Right cardiac atrium (tissue), 5 donors: ENCODE measurements at regions of chr6 and their contacts with region 1.

Region 1: DNA sequence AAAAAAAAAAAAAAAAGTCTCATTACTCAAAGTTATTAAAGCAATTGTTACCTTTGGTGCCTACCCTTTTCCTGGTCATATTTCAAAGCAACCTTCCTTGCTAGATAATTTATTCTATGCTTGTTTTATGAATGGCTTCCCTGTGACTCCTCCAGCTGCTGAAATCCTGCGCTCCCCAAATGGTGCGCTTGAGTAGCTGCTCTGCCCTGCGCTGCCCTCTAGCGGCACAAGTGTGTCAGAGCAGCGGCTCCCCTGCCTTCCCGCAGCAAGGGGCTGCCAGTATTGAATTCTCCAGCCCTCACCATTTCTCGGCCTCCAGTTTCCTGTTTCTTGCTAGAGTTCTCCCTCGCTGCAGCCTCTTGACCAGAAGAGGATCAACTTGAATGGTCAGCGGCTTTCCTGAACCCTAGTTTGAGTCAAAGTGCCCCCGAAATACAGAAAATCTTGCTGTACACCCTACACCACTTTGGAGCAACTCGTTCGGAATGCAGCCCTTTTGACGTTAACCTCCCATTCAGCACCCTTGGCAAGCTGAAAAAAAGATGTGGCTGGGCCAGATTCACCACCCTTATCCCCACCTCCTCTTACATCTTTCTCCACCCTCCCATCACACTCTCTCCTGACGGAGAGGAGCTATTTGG is 60.4 kb upstream of the KLHL31 start:
- DNase-seq: peak; percentile 79 to 92 (median 89)
- ATAC-seq: peak; percentile 85 to 87
- H3K4me3 ChIP-seq: no peak overlapping the region
- H3K27ac ChIP-seq: no peak overlapping the region
- H3K4me1 ChIP-seq: no peaks in the 10 kb centered on the region
- H3K27me3 ChIP-seq: no peaks in the 10 kb centered on the region

Region 2: DNA sequence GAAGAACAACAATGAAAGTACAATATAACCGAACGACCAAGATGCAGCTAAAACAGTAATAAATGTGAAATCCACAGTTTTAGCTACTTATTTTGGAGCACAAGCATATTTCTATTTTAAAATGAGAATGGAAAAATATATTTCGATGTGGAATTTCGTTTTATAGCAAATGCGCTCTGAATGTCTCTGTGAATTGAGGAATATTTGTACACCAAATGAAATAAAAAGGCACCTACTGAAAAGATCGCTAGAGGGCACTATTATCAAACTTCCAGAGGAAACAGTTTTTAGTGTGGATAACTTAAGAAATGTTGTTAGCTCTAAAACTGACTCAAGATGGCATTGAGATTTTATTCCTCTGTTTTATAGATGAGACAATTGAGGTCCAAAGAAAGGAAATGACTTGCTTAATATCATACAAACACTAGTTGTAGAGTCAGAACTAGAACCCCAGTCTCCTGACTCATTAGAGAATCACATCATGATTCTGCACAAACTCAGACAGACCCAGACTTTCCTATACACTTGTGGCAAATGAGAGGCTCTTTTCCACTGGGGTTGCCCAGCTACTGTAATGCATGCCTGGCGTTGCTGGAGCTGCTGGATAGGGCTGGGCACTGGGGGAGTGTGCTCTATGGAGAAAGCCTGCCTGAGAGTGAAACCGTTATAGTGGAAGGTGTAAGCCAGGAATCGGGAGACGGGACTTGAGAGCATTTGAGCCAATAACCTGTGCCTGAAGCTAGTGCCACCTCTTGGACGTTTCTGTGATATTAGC is 232.9 kb before region 1 on chr6:
- intact Hi-C with region 1: loop called (anchors 2 to 10 kb)
- DNase-seq: no peak
- ATAC-seq: peak; percentile 76 to 84
- H3K4me3 ChIP-seq: peak overlapping the region; percentile 3
- H3K27ac ChIP-seq: no peak overlapping the region
- H3K4me1 ChIP-seq: no peaks in the 10 kb centered on the region
- H3K27me3 ChIP-seq: no peaks in the 10 kb centered on the region

Region 3: GRCh38 chr6:53524455-53524815 is 201.5 kb before region 1 on chr6:
- intact Hi-C with region 1: loop called in 1 of 4 experiments (anchors 10 kb)
- DNase-seq: no peak
- ATAC-seq: no peak
- H3K4me3 ChIP-seq: no peak overlapping the region
- H3K27ac ChIP-seq: no peak overlapping the region
- H3K4me1 ChIP-seq: peaks cover 12% of the 10 kb centered on the region
- H3K27me3 ChIP-seq: no peaks in the 10 kb centered on the region

Region 4: GRCh38 chr6:53673162-53673683 is 52.7 kb before region 1 on chr6:
- intact Hi-C with region 1: no loop called
- DNase-seq: no peak
- ATAC-seq: peak; percentile 49 to 56
- H3K4me3 ChIP-seq: no peak overlapping the region
- H3K27ac ChIP-seq: peak overlapping the region; percentile 68
- H3K4me1 ChIP-seq: peaks cover 4% of the 10 kb centered on the region
- H3K27me3 ChIP-seq: no peaks in the 10 kb centered on the region